Endothelial cell of umbilical vein (primary cell): ENCODE measurements at regions of chr17 and their contacts with region 1.

Region 1: GRCh38 chr17:39153599-39154051 is 2.2 kb upstream of the PLXDC1 start:
- DNase-seq: peak; percentile 93
- H3K4me3 ChIP-seq: peak overlapping the region; percentile 35 to 82 (median 68)
- H3K27ac ChIP-seq: peak overlapping the region; percentile 0
- H3K4me1 ChIP-seq: peaks cover 8% of the 10 kb centered on the region
- H3K27me3 ChIP-seq: peaks cover 19 to 27% of the 10 kb centered on the region in 2 experiments
- CTCF ChIP-seq: peak in 1 of 2 donors; percentile 4
- POLR2A ChIP-seq: no peak

Region 2: DNA sequence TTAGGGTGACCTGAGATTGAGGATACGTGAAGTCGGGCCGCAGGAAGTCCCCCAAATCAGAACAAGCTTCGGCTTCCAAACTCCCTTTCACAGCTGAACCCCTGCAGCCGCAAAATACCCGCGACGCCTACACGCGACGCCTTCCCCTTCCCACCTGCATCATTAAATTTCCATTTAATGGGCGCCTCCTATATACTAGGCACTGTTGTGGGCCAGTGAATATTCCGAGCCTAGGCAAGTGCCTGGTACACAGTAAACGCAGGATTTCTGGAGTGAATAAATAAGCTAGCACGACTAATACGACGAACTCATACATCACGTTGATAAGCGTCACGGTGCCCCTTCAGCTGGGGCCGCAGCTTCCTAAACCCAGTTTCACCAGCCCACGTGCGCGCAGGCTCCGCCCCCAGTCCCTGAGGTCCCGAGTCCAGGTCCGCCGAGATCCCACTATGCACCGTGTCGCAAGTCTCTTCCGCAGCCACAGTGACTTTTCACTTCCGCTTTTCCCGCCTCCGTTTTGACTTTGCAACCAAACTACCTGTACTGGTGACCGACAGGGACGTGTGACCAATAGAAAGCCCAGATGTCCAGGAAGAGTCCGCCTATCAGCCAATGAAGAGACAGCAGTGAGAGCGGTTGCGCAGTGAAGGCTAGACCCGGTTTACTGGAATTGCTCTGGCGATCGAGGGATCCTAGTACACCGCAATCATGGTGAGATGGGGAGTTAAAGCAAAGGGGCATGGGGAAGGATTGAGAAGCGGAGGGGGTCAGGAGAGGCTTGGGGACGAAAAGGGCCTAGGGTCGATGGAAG is 401.3 kb before region 1 on chr17 and contains the start of gene PSMB3:
- CTCF ChIA-PET with region 1: no interaction called
- POLR2A ChIA-PET with region 1: no interaction called
- dilution Hi-C with region 1: no loop called
- intact Hi-C with region 1: loop called (anchors 5 kb)
- DNase-seq: peak; percentile 99
- H3K4me3 ChIP-seq: peak within 1 kb of the TSS; percentile 59 to 82 (median 73)
- H3K27ac ChIP-seq: peak within 1 kb of the TSS; percentile 40
- H3K4me1 ChIP-seq: peaks cover 34% of the 10 kb centered on the region
- H3K27me3 ChIP-seq: no peaks in the 10 kb centered on the region
- CTCF ChIP-seq: no peak
- POLR2A ChIP-seq: peak; percentile 3
- total RNA-seq, gene PSMB3: 213 and 227 TPM in 2 replicates

Region 3: DNA sequence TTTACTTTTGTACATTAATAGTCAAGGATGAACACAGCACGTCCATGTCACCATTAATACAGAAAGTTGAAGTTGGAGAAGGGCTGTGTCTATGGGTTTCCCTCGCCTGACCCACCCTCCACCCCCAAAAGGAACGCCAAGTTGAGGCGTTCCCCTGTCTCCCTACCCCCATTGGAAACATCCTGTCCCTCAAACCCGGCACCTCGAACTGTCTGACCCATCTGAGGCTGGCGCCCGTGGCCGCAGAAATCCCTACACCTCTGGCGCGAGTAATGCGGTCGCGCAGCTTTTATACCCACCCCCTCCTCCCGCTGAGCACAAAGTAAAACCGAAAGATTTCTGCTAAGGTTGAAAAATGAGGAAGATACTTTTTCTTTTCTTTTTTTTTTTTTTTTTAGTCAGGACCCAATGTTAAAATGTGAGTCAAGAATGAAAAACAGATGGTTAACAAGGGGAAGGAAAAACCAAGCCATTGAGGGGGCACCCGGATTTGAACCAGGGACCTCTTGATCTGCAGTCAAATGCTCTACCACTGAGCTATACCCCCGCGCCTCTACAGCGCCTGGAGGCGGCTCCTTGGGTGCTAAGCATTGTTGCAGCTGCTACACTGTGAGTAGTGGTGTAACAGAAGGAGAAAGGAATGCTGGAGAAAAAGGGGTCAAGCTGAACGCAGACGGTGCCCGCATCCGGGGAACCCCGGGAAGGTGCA is 284.7 kb before region 1 on chr17:
- CTCF ChIA-PET with region 1: interaction called, 23 read pairs
- POLR2A ChIA-PET with region 1: interaction called, 7 read pairs
- dilution Hi-C with region 1: no loop called
- intact Hi-C with region 1: loop called (anchors 1 kb)
- DNase-seq: peak; percentile 88
- H3K4me3 ChIP-seq: peak overlapping the region; percentile 74 to 93 (median 84)
- H3K27ac ChIP-seq: peak overlapping the region; percentile 24
- H3K4me1 ChIP-seq: peaks cover 38% of the 10 kb centered on the region
- H3K27me3 ChIP-seq: no peaks in the 10 kb centered on the region
- CTCF ChIP-seq: peak in 1 of 2 donors; percentile 17
- POLR2A ChIP-seq: no peak

Region 4: DNA sequence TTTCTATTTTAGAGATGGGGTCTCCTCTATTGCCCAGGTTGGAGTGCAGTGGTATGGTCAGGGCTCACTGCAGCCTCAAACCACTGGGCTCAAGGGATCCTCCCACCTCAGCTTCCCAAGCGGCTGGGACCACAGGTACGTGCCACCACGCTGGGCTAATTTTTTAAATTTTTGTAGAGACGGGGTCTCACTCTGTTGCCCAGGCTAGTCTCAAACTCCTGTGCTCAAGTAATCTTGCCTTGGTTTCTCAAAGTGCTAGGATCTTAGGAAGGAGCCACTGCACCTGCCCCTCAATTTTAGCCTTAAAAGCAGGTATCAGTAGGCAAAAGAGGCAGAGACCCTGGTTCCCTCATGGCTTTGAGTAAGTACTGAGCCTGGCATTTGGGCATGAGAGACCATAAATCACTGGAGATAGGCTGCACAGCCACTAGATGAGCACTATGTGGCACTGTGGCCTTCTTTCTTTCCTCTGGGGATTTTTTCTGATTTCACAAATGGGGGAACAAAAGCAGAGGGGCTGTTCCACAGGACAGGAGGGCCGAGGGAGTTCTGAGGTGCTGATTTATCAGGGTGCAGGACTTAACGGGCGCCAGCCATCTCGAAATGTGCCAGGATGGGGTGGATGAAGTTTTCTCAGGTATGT is 84.4 kb before region 1 on chr17:
- CTCF ChIA-PET with region 1: interaction called, 11 read pairs
- POLR2A ChIA-PET with region 1: no interaction called
- dilution Hi-C with region 1: no loop called
- intact Hi-C with region 1: loop called (anchors 1 kb)
- DNase-seq: peak; percentile 19
- H3K4me3 ChIP-seq: no peak overlapping the region
- H3K27ac ChIP-seq: no peak overlapping the region
- H3K4me1 ChIP-seq: no peaks in the 10 kb centered on the region
- H3K27me3 ChIP-seq: peaks cover 9 to 13% of the 10 kb centered on the region in 2 experiments
- CTCF ChIP-seq: peak; percentile 45 to 61
- POLR2A ChIP-seq: no peak

Region 5: DNA sequence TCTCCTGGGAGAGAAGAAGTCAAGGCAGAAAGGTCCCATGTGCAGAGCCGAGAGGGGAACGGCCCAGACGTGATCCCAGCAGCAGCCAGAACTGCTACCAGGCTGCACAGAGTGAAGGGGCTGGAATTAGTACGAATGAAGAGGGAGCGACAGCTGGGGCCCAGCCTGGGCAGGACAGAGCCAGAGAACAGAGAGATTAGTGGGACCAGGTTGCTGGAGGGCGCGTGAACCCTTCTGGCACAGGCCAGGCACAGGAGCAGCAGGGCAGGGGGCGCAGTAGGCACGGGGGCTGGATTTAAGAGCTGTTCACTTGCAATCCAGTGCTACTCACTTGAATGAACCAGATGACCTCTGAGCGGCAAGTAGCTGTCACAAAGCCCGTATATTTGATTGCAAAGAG is 69.1 kb before region 1 on chr17:
- CTCF ChIA-PET with region 1: no interaction called
- POLR2A ChIA-PET with region 1: no interaction called
- dilution Hi-C with region 1: no loop called
- intact Hi-C with region 1: no loop called
- DNase-seq: no peak
- H3K4me3 ChIP-seq: no peak overlapping the region
- H3K27ac ChIP-seq: no peak overlapping the region
- H3K4me1 ChIP-seq: no peaks in the 10 kb centered on the region
- H3K27me3 ChIP-seq: peaks cover 2 to 12% of the 10 kb centered on the region in 2 experiments
- CTCF ChIP-seq: no peak
- POLR2A ChIP-seq: no peak

Region 6: DNA sequence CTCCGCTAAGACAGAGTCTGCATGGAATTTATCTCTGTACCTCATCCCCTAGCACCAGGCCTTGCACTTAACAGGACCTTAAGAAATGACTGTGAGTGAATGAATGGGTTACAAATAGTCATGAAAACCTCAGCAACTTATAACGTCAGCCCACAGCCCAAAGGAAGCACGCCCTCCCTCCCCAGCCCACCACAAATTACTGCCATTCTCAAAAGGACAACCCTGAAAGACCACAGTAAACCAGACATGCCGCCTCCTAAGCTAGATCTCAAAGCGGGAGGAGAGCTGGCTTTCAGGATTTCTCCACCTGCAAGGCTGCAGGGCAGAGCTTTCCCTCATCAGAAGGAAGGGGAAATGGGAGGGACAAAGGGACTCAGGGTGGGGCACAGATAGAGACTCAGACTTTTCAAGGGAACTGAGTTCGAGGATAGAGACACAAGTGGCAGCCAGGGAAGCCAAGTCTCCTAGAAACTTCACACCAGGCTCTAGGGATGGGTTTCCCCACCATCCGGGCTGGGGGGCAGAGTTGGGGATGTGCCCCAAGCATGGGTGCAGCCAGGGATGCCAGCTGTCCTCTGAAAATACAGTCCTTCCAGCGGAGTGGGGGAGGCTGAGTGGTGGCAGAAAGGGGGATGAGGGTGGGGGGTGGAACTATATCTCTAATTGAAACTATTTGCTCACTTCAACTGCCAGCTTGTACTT is 58.9 kb before region 1 on chr17:
- CTCF ChIA-PET with region 1: no interaction called
- POLR2A ChIA-PET with region 1: no interaction called
- dilution Hi-C with region 1: no loop called
- intact Hi-C with region 1: no loop called
- DNase-seq: no peak
- H3K4me3 ChIP-seq: no peak overlapping the region
- H3K27ac ChIP-seq: no peak overlapping the region
- H3K4me1 ChIP-seq: no peaks in the 10 kb centered on the region
- H3K27me3 ChIP-seq: peaks cover 3 to 5% of the 10 kb centered on the region in 2 experiments
- CTCF ChIP-seq: no peak
- POLR2A ChIP-seq: no peak

Region 7: DNA sequence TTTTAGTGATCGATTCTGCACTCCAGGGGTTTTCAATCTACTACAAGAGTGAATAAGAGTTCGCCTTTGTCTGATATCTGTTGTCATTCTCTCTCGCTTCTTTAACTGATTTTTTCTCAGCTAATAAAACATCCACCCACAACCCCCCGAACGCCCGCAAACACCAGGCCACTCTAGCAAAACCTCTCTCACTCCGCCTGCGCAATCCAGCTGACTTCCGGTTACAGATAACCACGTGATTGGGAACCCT is 46.1 kb after region 1 on chr17:
- CTCF ChIA-PET with region 1: interaction called, 3 read pairs
- POLR2A ChIA-PET with region 1: interaction called, 4 read pairs
- dilution Hi-C with region 1: no loop called
- intact Hi-C with region 1: loop called (anchors 1 kb)
- DNase-seq: peak; percentile 92
- H3K4me3 ChIP-seq: peak overlapping the region; percentile 81 to 99 (median 96)
- H3K27ac ChIP-seq: peak overlapping the region; percentile 99
- H3K4me1 ChIP-seq: peaks cover 23% of the 10 kb centered on the region
- H3K27me3 ChIP-seq: no peaks in the 10 kb centered on the region
- CTCF ChIP-seq: no peak
- POLR2A ChIP-seq: peak; percentile 46

Region 8: DNA sequence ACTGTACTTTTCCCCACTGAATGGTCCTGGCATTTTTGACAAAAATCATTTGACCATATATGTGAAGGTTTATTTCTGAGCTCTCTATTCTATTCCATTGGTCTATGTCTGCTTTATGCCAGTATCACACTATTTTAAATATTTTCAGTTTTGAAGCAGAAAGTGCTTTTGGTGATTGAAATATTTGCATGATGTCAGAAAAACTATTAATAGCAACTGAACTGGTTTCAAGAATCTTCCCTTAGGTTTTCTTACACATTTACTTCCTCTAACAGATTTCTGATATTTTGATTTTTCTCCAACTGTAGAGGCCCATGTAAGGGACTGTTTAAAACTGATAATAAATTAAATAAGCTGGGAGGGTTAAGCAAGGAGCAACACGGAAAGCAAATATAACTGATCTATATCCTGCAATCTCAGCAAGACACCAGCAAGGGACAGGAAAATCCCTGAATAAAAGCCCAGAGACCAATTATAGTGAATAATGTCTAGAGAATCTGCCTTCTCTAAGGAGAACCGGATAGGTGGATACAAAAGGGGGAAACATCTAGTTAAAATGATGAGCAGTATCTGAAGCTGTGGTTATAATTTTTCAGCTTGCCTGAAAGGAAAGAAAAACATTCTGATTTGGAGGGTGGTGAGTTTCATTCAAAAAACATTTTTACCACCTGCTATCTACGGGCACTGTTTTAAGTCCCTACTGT is 153.0 kb after region 1 on chr17:
- CTCF ChIA-PET with region 1: no interaction called
- POLR2A ChIA-PET with region 1: no interaction called
- dilution Hi-C with region 1: no loop called
- intact Hi-C with region 1: no loop called
- DNase-seq: no peak
- H3K4me3 ChIP-seq: no peak overlapping the region
- H3K27ac ChIP-seq: no peak overlapping the region
- H3K4me1 ChIP-seq: no peaks in the 10 kb centered on the region
- H3K27me3 ChIP-seq: no peaks in the 10 kb centered on the region
- CTCF ChIP-seq: no peak
- POLR2A ChIP-seq: no peak